ENCODE measurements at regions of chr6 and their contacts with region 1.

Region 1: DNA sequence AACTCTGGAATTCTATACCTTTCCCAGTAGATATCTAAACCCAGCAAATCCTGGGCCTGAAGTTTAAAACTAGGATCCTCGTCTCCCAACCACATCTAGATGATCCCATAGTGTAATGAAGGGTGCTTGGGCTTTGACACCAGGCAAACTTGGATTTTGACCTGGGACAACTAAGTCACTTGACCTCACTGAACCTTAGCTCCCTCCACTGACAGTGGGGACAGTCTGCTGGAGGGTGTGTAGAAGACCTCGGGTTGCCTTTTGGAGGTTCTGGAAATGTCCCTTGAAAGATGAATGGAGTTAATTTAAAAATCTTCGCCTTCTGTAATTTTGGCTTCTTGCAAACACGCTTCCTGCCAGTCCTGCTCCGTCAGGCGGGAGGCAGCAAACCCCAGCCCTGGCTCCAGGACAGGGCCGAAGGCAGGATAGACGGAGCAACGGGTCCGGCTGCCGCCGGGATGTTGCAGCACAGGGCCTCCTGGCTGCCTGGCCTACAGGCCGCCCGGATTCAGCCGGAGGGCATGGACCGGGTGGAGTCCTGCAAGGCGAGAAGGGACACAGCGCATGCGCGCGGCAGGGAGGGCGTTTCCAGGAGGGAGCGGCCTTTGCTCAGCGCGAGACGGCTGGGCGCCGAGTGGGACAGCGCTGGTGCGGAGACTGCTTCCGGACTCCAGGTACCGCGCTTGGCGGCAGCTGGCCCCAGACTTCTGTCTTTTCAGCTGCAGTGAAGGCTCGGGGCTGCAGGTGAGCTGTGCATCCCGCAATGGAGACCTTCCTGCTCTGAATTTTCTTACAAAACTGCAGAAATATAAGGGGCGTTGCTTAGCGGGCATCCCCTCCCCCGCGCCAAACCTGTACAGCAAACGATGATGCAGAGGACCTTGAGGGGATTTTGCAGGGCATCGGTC is at the start of gene TMEM14A:
- DNase-seq: peak; percentile 53 to 95
- H3K4me3 ChIP-seq: peak within 1 kb of the TSS; percentile 82 to 86
- H3K27ac ChIP-seq: peak within 1 kb of the TSS; percentile 35 to 56
- H3K4me1 ChIP-seq: peaks cover 6 to 10% of the 10 kb centered on the region in 2 donors
- H3K27me3 ChIP-seq: no peaks in the 10 kb centered on the region
- CTCF ChIP-seq: peak in 1 of 3 experiments; percentile 15
- total RNA-seq, gene TMEM14A: 11.9 TPM

Region 2: GRCh38 chr6:52612336-52613054 is 58.3 kb before region 1 on chr6:
- intact Hi-C with region 1: no loop called
- DNase-seq: no peak
- H3K4me3 ChIP-seq: no peak overlapping the region
- H3K27ac ChIP-seq: no peak overlapping the region
- H3K4me1 ChIP-seq: no peaks in the 10 kb centered on the region
- H3K27me3 ChIP-seq: no peaks in the 10 kb centered on the region
- CTCF ChIP-seq: no peak

Region 3: GRCh38 chr6:52881996-52882841 is 211.5 kb after region 1 on chr6:
- intact Hi-C with region 1: loop called (anchors 5 kb)
- DNase-seq: peak in 1 of 2 donors; percentile 77
- H3K4me3 ChIP-seq: peak overlapping the region; percentile 62 to 63
- H3K27ac ChIP-seq: no peak overlapping the region
- H3K4me1 ChIP-seq: no peaks in the 10 kb centered on the region
- H3K27me3 ChIP-seq: no peaks in the 10 kb centered on the region
- CTCF ChIP-seq: peak; percentile 54 to 82 (median 72)

Region 4: DNA sequence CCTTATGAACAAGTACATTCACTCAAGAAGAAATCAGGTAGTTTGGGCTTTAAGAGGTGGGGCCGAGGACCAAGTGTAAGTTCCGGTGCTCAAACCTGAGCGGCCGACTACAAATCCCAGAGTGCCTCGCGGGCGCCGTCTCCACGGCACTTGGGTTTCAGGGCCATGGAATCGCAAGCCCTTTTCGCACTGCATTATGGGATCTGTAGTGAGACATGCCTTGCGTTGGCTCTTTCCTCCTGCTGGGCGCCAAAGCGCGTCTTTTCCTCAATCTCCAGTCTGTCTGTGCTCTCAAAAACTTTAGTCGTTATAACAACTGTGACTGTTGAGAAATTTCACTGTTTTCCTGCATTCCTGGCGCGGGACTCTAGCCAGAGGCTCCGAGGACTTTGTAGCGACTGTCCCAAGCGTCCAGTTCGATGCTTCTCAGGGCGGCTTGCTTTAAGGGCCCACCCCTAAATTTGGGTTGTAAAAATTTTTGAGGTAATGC is 394.0 kb after region 1 on chr6:
- intact Hi-C with region 1: loop called (anchors 5 kb)
- DNase-seq: peak; percentile 95 to 99
- H3K4me3 ChIP-seq: peak overlapping the region; percentile 97 to 98
- H3K27ac ChIP-seq: peak overlapping the region; percentile 94 to 95
- H3K4me1 ChIP-seq: peaks cover under 1 to 4% of the 10 kb centered on the region in 2 donors
- H3K27me3 ChIP-seq: no peaks in the 10 kb centered on the region
- CTCF ChIP-seq: no peak

Measured in ascending aorta (tissue), 2 donors.